Endothelial cell of umbilical vein (primary cell): ENCODE measurements at regions of chr12 and their contacts with region 1.

Region 1: GRCh38 chr12:46450279-46450748 is 77.7 kb upstream of the SLC38A2 start:
- DNase-seq: peak; percentile 73
- H3K4me3 ChIP-seq: no peak overlapping the region
- H3K27ac ChIP-seq: peak overlapping the region; percentile 84
- H3K4me1 ChIP-seq: peaks cover 64% of the 10 kb centered on the region
- H3K27me3 ChIP-seq: no peaks in the 10 kb centered on the region
- CTCF ChIP-seq: no peak
- POLR2A ChIP-seq: no peak

Region 2: GRCh38 chr12:45477526-45477925 is 972.8 kb before region 1 on chr12:
- CTCF ChIA-PET with region 1: no interaction called
- POLR2A ChIA-PET with region 1: no interaction called
- dilution Hi-C with region 1: no loop called
- intact Hi-C with region 1: no loop called
- DNase-seq: no peak
- H3K4me3 ChIP-seq: no peak overlapping the region
- H3K27ac ChIP-seq: no peak overlapping the region
- H3K4me1 ChIP-seq: no peaks in the 10 kb centered on the region
- H3K27me3 ChIP-seq: peaks cover 5 to 20% of the 10 kb centered on the region in 2 experiments
- CTCF ChIP-seq: no peak
- POLR2A ChIP-seq: no peak

Region 3: GRCh38 chr12:46332260-46332659 is 118.1 kb before region 1 on chr12:
- CTCF ChIA-PET with region 1: no interaction called
- POLR2A ChIA-PET with region 1: no interaction called
- dilution Hi-C with region 1: no loop called
- intact Hi-C with region 1: no loop called
- DNase-seq: no peak
- H3K4me3 ChIP-seq: no peak overlapping the region
- H3K27ac ChIP-seq: no peak overlapping the region
- H3K4me1 ChIP-seq: no peaks in the 10 kb centered on the region
- H3K27me3 ChIP-seq: peaks cover 0 to 7% of the 10 kb centered on the region in 2 experiments
- CTCF ChIP-seq: no peak
- POLR2A ChIP-seq: no peak

Region 4: DNA sequence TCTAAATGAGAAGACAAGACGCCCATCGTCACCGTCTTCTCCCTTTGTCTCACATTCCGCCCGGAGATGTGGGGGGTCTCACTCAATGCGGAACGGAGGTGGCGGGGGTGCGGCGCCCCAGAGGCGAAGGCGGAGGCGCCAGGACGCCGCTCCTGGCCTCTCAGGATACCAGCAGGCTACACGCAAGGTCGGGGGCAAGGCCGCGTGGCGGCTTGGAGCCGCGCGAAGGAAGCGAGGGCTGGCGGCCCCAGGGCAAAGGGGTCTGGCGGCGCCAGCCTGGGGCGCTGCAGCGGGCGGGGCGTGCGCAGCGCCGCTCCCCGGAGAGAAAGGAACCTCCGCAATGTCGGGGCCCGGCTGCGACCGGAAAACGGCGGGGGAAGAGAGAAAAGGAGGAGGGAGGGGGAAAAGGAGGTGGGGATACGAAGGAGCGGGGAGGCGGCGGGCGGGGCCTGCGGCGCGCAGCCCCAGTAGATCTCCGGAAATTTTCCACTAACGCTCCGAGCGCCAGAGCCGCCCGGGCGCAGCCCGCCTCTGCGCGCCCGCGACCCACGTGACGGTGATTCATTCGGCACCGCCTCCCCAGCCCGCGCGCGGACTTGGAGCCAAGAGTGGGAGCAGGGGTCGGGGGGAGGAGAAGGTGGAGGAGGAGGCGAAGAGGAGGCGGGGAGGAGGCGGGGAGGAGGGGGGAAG is 67.2 kb before region 1 on chr12:
- CTCF ChIA-PET with region 1: interaction called, 7 read pairs
- POLR2A ChIA-PET with region 1: no interaction called
- dilution Hi-C with region 1: no loop called
- intact Hi-C with region 1: loop called (anchors 1 kb)
- DNase-seq: peak; percentile 97
- H3K4me3 ChIP-seq: peak overlapping the region; percentile 39 to 68 (median 44)
- H3K27ac ChIP-seq: peak overlapping the region; percentile 98
- H3K4me1 ChIP-seq: peaks cover 44% of the 10 kb centered on the region
- H3K27me3 ChIP-seq: no peaks in the 10 kb centered on the region
- CTCF ChIP-seq: peak in 1 of 2 donors; percentile 14
- POLR2A ChIP-seq: peak; percentile 76

Region 5: DNA sequence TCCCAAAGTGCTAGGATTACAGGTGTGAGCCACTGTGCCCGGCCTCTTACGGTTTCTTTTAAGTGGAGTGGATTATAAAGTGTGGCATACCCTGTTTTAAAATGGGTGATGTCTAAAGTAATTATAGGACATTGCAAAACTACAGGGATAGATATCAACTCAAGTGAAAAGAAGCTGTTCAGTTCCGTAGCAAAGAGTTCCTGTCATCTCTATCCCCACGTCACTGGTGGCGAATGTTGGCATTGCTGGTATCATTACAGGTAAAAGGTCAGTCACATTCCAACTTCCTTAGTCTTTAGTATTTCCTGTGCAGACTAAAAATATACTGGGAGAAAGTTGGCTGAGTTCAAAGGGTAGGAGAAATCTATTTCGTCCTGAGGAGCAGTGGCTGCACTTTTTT is 17.8 kb after region 1 on chr12:
- CTCF ChIA-PET with region 1: interaction called, 6 read pairs
- POLR2A ChIA-PET with region 1: no interaction called
- dilution Hi-C with region 1: no loop called
- intact Hi-C with region 1: loop called (anchors 1 kb)
- DNase-seq: no peak
- H3K4me3 ChIP-seq: no peak overlapping the region
- H3K27ac ChIP-seq: no peak overlapping the region
- H3K4me1 ChIP-seq: peaks cover 47% of the 10 kb centered on the region
- H3K27me3 ChIP-seq: no peaks in the 10 kb centered on the region
- CTCF ChIP-seq: no peak
- POLR2A ChIP-seq: no peak

Region 6: GRCh38 chr12:46562625-46563228 is 112.4 kb after region 1 on chr12:
- CTCF ChIA-PET with region 1: no interaction called
- POLR2A ChIA-PET with region 1: no interaction called
- dilution Hi-C with region 1: no loop called
- intact Hi-C with region 1: loop called (anchors 5 kb)
- DNase-seq: peak; percentile 94
- H3K4me3 ChIP-seq: peak overlapping the region in 1 of 3 experiments; percentile 28
- H3K27ac ChIP-seq: peak overlapping the region; percentile 96
- H3K4me1 ChIP-seq: peaks cover 24% of the 10 kb centered on the region
- H3K27me3 ChIP-seq: no peaks in the 10 kb centered on the region
- CTCF ChIP-seq: no peak
- POLR2A ChIP-seq: peak; percentile 39

Region 7: GRCh38 chr12:46874642-46875041 is 424.3 kb after region 1 on chr12:
- CTCF ChIA-PET with region 1: no interaction called
- POLR2A ChIA-PET with region 1: no interaction called
- dilution Hi-C with region 1: no loop called
- intact Hi-C with region 1: no loop called
- DNase-seq: peak; percentile 31
- H3K4me3 ChIP-seq: no peak overlapping the region
- H3K27ac ChIP-seq: no peak overlapping the region
- H3K4me1 ChIP-seq: no peaks in the 10 kb centered on the region
- H3K27me3 ChIP-seq: peaks cover 0 to 6% of the 10 kb centered on the region in 2 experiments
- CTCF ChIP-seq: no peak
- POLR2A ChIP-seq: no peak